Adrenal gland (tissue), 19 donors: ENCODE measurements at regions of chr19 and their contacts with region 1.

Region 1: DNA sequence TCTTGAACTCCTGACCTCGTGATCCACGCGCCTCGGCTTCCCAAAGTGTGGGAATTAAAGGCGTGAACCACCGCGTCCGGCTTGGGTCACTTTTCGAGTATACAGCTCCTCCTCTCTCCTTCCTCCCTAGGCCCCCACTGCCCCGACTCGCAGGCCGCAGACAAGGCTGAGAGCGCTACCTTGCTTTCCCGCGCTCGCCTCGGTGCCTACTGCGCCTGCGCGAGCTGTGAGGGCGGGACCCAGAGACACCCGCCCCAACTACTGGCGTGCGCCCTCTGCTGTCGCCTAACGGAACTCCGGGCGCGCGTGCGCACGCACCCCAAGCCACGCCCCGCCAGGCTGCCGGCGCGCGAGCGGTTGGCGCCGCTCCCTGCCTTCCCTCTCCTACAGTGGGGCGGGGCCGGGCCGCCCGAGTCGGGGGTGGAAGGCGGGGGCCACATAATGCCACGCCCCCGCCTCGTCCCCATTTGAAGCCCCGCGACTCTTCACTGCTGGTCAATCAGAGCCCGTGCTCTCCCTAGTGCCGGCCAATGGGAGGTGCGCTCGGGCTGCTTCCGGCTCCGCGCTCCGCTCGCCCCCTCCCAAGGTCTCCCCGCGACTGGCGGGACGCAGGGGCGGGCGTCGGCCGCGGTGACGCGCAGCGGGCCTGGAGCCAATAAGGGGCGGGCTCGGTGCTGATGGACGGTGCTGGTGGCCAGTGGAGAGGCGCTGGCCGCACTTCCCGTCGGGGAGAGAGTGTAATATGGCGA is at the start of gene RAB8A:
- DNase-seq: peak; percentile 99
- H3K4me3 ChIP-seq: peak within 1 kb of the TSS; percentile 76 to 97 (median 90)
- H3K27ac ChIP-seq: peak within 1 kb of the TSS; percentile 79 to 93 (median 89)
- H3K4me1 ChIP-seq: peaks cover 15 to 47% of the 10 kb centered on the region in 2 donors
- H3K27me3 ChIP-seq: no peaks in the 10 kb centered on the region
- CTCF ChIP-seq: peak; percentile 84 to 100 (median 96)
- POLR2A ChIP-seq: no peak
- total RNA-seq, gene RAB8A: 42.6 to 118 (median 72.1) TPM

Region 2: DNA sequence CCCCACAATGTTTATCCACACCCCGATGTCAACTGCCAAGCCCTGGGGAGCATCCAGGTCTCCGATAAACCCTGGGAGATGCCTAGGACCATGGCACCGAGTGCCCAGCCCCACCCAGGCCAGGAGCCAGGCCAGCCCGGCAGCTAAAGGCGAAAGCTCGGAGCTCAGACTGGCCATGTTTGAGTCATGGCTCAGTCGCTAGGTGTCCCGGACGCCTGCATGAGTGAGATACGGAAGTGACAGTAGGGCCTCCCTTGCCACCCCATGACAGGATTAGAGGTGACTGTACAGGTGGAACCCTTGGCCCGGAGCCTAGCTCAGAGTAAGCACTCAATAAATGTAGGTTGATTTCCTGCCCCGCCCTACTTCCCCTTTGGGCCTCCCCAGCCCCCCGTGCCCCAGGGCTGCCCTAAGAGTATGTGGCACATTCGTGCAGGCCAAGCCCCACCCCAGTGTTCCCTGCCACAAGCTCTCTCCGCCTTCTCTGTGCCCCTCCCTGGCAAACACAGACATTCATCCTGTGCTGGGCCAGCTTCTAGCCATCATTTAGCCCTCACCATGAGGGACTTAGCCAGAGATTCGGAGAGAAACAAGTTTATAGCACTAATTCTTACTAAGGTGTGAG is 40.9 kb before region 1 on chr19:
- intact Hi-C with region 1: loop called in 1 of 2 experiments (anchors 5 kb)
- DNase-seq: peak in 5 of 7 donors; percentile 52 to 80 (median 58)
- H3K4me3 ChIP-seq: no peak overlapping the region
- H3K27ac ChIP-seq: peak overlapping the region in 3 of 5 donors; percentile 47 to 86 (median 69)
- H3K4me1 ChIP-seq: peaks cover 4 to 23% of the 10 kb centered on the region in 2 donors
- H3K27me3 ChIP-seq: no peaks in the 10 kb centered on the region
- CTCF ChIP-seq: no peak
- POLR2A ChIP-seq: no peak

Region 3: GRCh38 chr19:16153582-16154336 is 42.4 kb after region 1 on chr19:
- intact Hi-C with region 1: no loop called
- DNase-seq: no peak
- H3K4me3 ChIP-seq: no peak overlapping the region
- H3K27ac ChIP-seq: no peak overlapping the region
- H3K4me1 ChIP-seq: no peaks in the 10 kb centered on the region
- H3K27me3 ChIP-seq: no peaks in the 10 kb centered on the region
- CTCF ChIP-seq: no peak
- POLR2A ChIP-seq: no peak

Region 4: DNA sequence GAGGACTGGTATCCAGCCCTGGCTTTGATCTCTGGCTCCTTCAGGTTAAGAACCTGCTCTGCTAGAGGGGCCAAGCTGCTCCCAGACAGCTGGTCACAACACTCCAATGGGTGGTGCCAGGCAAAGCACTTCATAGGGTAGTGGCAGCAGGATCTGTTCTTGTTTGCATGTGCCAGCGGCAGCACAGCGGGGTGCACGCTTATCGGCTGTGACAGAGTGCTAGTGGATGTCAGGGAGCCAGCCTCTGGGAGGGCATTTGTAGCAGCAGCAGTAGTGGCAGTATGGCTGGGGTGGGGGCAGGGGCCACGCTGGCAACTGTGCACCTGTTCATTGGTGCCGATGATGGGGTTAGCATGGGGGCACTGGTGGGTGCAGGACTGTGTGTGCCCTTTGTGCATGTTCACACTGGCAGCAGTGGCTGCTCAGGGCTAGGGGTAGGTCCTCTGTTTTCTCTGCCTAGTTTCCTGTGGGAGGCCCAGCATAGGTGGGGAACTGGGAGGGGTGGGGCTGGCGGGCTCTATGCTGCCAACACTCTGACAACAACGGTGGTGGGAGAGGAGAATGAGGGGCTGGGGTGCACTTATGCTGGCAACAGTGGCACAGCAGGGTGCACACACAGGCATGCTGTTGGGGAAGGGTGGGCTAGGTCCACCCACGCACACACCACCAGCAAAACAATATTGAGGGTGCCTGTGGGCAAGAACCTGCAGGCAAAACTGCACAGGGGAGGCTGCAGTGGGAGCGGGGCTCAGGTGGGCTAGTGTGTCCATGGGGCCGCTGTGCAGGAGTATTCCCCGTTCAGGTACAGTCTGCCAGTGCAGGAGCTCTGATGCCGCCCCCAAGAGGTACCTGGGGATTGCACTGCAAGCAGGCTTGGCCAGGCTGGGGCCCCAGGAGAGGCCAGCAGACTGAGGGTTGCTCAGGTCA is 105.7 kb after region 1 on chr19:
- intact Hi-C with region 1: no loop called
- DNase-seq: no peak
- H3K4me3 ChIP-seq: no peak overlapping the region
- H3K27ac ChIP-seq: no peak overlapping the region
- H3K4me1 ChIP-seq: no peaks in the 10 kb centered on the region
- H3K27me3 ChIP-seq: no peaks in the 10 kb centered on the region
- CTCF ChIP-seq: no peak
- POLR2A ChIP-seq: no peak